Activated T-helper 2 cell treated with anti-CD3 and anti-CD28 coated beads, Interferon-gamma antibody, Interleukin-2, Interleukin-4, amounts not matched to agents 10 μg/mL and 5 μg/mL and 100 μg/mL, durations not matched to agents 14 hours and 24 hours and 36 hours (primary cell): ENCODE measurements at regions of chr17 and their contacts with region 1.

Region 1: GRCh38 chr17:35808962-35809854 is at the start of gene TAF15:
- DNase-seq: peak; percentile 96
- H3K4me3 Mint-ChIP-seq: peak within 1 kb of the TSS; percentile 91
- H3K27ac Mint-ChIP-seq: peak within 1 kb of the TSS; percentile 97
- H3K4me1 Mint-ChIP-seq: peaks cover 34% of the 10 kb centered on the region
- H3K27me3 Mint-ChIP-seq: no peaks in the 10 kb centered on the region
- total RNA-seq, gene TAF15: 315 and 321 TPM in 2 replicates

Region 2: DNA sequence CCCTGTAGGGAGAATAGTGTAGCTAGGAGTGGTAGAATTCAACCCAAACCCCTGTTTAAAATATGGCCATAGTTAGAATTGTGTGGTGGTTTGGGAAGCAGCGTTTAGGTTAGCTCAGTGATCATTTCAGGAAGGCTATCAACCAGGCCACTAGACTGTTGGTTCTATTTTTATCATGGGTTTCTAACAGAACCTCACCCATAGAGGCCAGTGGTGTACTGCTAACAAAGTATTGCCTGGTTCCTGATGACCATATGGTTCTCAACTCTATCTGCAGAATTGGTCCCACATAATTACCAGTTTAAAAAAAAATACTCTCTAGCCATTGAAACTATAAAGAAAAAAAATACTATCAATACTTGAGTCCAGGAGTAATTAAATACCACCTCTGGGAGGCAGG is 148.3 kb before region 1 on chr17:
- intact Hi-C with region 1: no loop called
- DNase-seq: no peak
- H3K4me3 Mint-ChIP-seq: no peak overlapping the region
- H3K27ac Mint-ChIP-seq: no peak overlapping the region
- H3K4me1 Mint-ChIP-seq: peaks cover 2% of the 10 kb centered on the region
- H3K27me3 Mint-ChIP-seq: no peaks in the 10 kb centered on the region

Region 3: DNA sequence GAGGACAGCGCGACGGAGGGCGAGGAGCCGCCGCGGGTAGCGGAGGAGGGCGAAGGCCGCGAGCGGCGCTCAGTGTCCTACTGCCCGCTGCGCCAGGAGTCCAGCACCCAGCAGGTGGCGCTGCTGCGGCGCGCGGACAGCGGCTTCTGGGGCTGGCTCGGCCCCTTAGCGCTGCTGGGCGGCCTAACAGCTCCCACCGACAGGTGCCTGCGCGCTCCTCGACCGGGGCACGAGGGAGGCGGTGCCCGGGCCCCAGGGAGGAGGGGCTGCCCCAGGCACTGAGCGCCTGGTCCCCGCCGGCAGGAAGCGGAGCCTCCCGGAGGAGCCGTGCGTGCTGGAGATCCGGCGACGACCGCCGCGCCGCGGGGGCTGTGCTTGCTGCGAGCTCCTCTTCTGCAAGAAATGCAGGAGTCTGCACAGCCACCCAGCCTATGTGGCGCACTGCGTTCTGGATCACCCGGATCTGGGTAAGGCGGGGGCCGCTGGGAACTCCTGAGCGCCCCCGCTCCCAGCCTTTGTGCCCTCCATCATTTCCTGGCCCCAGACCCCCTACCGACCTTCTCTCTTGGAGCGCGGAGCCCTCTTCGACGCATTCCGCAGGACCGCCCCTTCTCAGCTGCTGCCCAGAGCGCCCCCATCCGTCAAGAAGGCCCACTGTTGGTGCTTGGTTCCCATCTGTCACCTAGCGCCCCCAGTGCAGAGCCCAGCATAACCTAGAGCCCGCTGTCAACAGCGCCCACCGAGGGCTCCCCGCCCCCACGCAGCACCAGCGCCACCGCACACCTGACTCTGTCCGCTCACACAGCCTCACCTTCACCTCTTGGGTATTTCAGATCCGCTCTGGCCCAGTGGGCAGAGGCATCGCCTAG is 44.9 kb before region 1 on chr17:
- intact Hi-C with region 1: loop called (anchors 1 kb)
- DNase-seq: peak; percentile 81
- H3K4me3 Mint-ChIP-seq: peak overlapping the region; percentile 86
- H3K27ac Mint-ChIP-seq: peak overlapping the region; percentile 62
- H3K4me1 Mint-ChIP-seq: peaks cover 8% of the 10 kb centered on the region
- H3K27me3 Mint-ChIP-seq: peaks cover 5% of the 10 kb centered on the region

Region 4: GRCh38 chr17:35788504-35789368 is 20.5 kb before region 1 on chr17:
- intact Hi-C with region 1: no loop called
- DNase-seq: no peak
- H3K4me3 Mint-ChIP-seq: no peak overlapping the region
- H3K27ac Mint-ChIP-seq: no peak overlapping the region
- H3K4me1 Mint-ChIP-seq: peaks cover 3% of the 10 kb centered on the region
- H3K27me3 Mint-ChIP-seq: peaks cover 51% of the 10 kb centered on the region

Region 5: GRCh38 chr17:35906191-35906922 is 97.1 kb after region 1 on chr17:
- intact Hi-C with region 1: no loop called
- DNase-seq: no peak
- H3K4me3 Mint-ChIP-seq: no peak overlapping the region
- H3K27ac Mint-ChIP-seq: no peak overlapping the region
- H3K4me1 Mint-ChIP-seq: peaks cover 5% of the 10 kb centered on the region
- H3K27me3 Mint-ChIP-seq: no peaks in the 10 kb centered on the region